Activated T-helper 1 cell treated with anti-CD3 and anti-CD28 coated beads, Interleukin-12 subunit alpha, Interleukin-12 subunit beta, Interleukin-2, Interleukin-4 antibody, amounts not matched to agents 30 ng/mL and 10 ng/mL and 1 ng/mL, durations not matched to agents 14 hours and 24 hours and 36 hours (primary cell): ENCODE measurements at regions of chr10 and their contacts with region 1.

Region 1: DNA sequence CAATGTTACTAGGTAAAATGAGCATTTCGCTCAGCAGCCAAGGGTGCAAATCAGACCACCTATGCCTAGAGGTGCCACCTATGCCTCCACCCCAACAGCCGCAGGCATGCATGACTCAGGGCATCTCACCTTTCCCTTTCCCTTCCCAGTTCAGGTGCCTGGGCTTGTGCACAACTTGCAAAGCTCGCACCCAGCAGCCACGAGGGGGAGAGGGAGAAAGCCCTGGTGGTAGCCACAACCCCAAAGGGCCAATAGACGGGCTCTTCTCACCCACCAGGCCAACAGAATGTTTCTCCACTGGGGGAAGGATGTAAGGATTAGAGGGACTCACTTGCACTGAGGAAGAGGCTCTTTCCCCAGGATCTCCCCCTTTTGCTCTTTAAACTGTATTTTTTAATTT is 462.3 kb upstream of the PCDH15 start:
- DNase-seq: no peak
- H3K4me3 Mint-ChIP-seq: no peak overlapping the region
- H3K27ac Mint-ChIP-seq: no peak overlapping the region
- H3K4me1 Mint-ChIP-seq: no peaks in the 10 kb centered on the region
- H3K27me3 Mint-ChIP-seq: no peaks in the 10 kb centered on the region

Region 2: GRCh38 chr10:55091691-55092328 is 171.5 kb before region 1 on chr10:
- intact Hi-C with region 1: loop called (anchors 10 kb)
- DNase-seq: no peak
- H3K4me3 Mint-ChIP-seq: no peak overlapping the region
- H3K27ac Mint-ChIP-seq: no peak overlapping the region
- H3K4me1 Mint-ChIP-seq: no peaks in the 10 kb centered on the region
- H3K27me3 Mint-ChIP-seq: no peaks in the 10 kb centered on the region

Region 3: DNA sequence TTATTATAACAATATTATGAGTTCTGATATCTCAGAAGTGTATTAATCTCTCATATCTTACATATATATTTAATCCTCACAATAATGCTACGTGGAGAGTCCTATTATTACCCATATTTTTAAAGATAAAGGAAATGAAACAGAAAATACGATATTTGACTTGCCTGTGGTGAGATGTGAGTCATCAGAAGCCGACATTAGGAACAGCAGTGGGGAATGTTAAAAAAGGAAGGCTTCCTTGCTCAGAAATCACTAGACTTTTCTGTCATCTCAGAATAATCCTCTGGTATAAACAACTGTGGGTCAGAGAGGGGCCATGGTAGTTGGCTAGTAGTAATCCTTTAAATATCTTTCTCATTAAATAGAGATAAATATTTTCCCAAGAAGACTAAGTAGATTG is 60.0 kb before region 1 on chr10:
- intact Hi-C with region 1: no loop called
- DNase-seq: no peak
- H3K4me3 Mint-ChIP-seq: no peak overlapping the region
- H3K27ac Mint-ChIP-seq: no peak overlapping the region
- H3K4me1 Mint-ChIP-seq: no peaks in the 10 kb centered on the region
- H3K27me3 Mint-ChIP-seq: no peaks in the 10 kb centered on the region

Region 4: GRCh38 chr10:55400075-55400849 is 136.9 kb after region 1 on chr10:
- intact Hi-C with region 1: no loop called
- DNase-seq: no peak
- H3K4me3 Mint-ChIP-seq: no peak overlapping the region
- H3K27ac Mint-ChIP-seq: no peak overlapping the region
- H3K4me1 Mint-ChIP-seq: no peaks in the 10 kb centered on the region
- H3K27me3 Mint-ChIP-seq: no peaks in the 10 kb centered on the region